Body of pancreas (tissue), 4 donors: ENCODE measurements at regions of chr11 and their contacts with region 1.

Region 1: GRCh38 chr11:111283945-111284481 is 14.3 kb upstream of the POU2AF3 start:
- DNase-seq: no peak
- ATAC-seq: peak; percentile 33
- H3K4me3 ChIP-seq: no peak overlapping the region
- H3K27ac ChIP-seq: no peak overlapping the region
- H3K4me1 ChIP-seq: no peaks in the 10 kb centered on the region
- H3K27me3 ChIP-seq: no peaks in the 10 kb centered on the region
- CTCF ChIP-seq: no peak
- POLR2A ChIP-seq: no peak

Region 2: GRCh38 chr11:111429066-111429506 is 145.1 kb after region 1 on chr11:
- intact Hi-C with region 1: loop called (anchors 5 kb)
- DNase-seq: peak; percentile 64 to 79 (median 76)
- ATAC-seq: peak; percentile 80
- H3K4me3 ChIP-seq: no peak overlapping the region
- H3K27ac ChIP-seq: no peak overlapping the region
- H3K4me1 ChIP-seq: peaks cover 5% of the 10 kb centered on the region
- H3K27me3 ChIP-seq: no peaks in the 10 kb centered on the region
- CTCF ChIP-seq: peak; percentile 58 to 82 (median 75)
- POLR2A ChIP-seq: no peak

Region 3: GRCh38 chr11:111446404-111447111 is 162.5 kb after region 1 on chr11:
- intact Hi-C with region 1: loop called (anchors 5 kb)
- DNase-seq: peak; percentile 72 to 90 (median 82)
- ATAC-seq: peak; percentile 95
- H3K4me3 ChIP-seq: no peak overlapping the region
- H3K27ac ChIP-seq: no peak overlapping the region
- H3K4me1 ChIP-seq: peaks cover 2% of the 10 kb centered on the region
- H3K27me3 ChIP-seq: no peaks in the 10 kb centered on the region
- CTCF ChIP-seq: peak; percentile 49 to 98 (median 90)
- POLR2A ChIP-seq: no peak